SK-N-SH (cell line): ENCODE measurements at regions of chr1 and their contacts with region 1.

Region 1: GRCh38 chr1:152001391-152002249 is 8.0 kb upstream of the S100A10 start:
- DNase-seq: peak; percentile 68
- H3K4me3 ChIP-seq: no peak overlapping the region; a peak in 1 of 4 replicates
- H3K27ac ChIP-seq: no peak overlapping the region
- H3K4me1 ChIP-seq: no peaks in the 10 kb centered on the region
- H3K27me3 ChIP-seq: peaks cover 40% of the 10 kb centered on the region
- CTCF ChIP-seq: peak; percentile 92
- EP300 ChIP-seq: no peak
- RAD21 ChIP-seq: peak; percentile 83

Region 2: GRCh38 chr1:151888972-151889570 is 112.5 kb before region 1 on chr1:
- CTCF ChIA-PET with region 1: interaction called, 13 read pairs
- POLR2A ChIA-PET with region 1: no interaction called
- DNase-seq: peak; percentile 23
- H3K4me3 ChIP-seq: no peak overlapping the region
- H3K27ac ChIP-seq: no peak overlapping the region
- H3K4me1 ChIP-seq: no peaks in the 10 kb centered on the region
- H3K27me3 ChIP-seq: no peaks in the 10 kb centered on the region
- CTCF ChIP-seq: peak; percentile 64
- EP300 ChIP-seq: no peak
- RAD21 ChIP-seq: peak; percentile 55

Region 3: DNA sequence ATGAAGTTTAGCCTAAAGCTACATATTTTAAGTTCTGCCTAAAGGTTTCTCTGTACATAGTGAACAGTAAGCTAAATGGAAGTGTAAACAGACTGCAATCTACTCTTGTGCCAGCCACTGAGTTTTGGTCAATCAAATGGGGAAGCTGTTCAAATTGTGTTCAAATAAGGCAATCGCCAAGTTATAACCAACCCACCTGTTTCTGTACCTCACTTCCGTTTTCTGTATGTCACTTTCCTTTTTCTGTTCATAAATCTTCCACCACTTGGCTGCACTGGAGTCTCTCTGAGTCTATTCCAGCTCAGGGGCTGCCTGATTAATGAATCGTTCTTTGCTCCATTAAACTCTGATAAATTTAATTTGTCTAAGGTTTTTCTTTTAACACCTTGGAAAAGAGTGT is 81.5 kb before region 1 on chr1:
- CTCF ChIA-PET with region 1: interaction called, 18 read pairs
- POLR2A ChIA-PET with region 1: no interaction called
- DNase-seq: no peak
- H3K4me3 ChIP-seq: no peak overlapping the region
- H3K27ac ChIP-seq: no peak overlapping the region
- H3K4me1 ChIP-seq: no peaks in the 10 kb centered on the region
- H3K27me3 ChIP-seq: peaks cover 43% of the 10 kb centered on the region
- CTCF ChIP-seq: no peak
- EP300 ChIP-seq: no peak
- RAD21 ChIP-seq: no peak

Region 4: GRCh38 chr1:151934048-151934493 is 67.5 kb before region 1 on chr1:
- CTCF ChIA-PET with region 1: interaction called, 172 read pairs
- POLR2A ChIA-PET with region 1: no interaction called
- DNase-seq: peak; percentile 52
- H3K4me3 ChIP-seq: peak overlapping the region in 1 of 2 experiments; percentile 43; a peak in 1 of 4 replicates
- H3K27ac ChIP-seq: no peak overlapping the region
- H3K4me1 ChIP-seq: no peaks in the 10 kb centered on the region
- H3K27me3 ChIP-seq: peaks cover 20% of the 10 kb centered on the region
- CTCF ChIP-seq: peak; percentile 91
- EP300 ChIP-seq: no peak
- RAD21 ChIP-seq: peak; percentile 90

Region 5: GRCh38 chr1:151968058-151968457 is 33.6 kb before region 1 on chr1:
- CTCF ChIA-PET with region 1: interaction called, 48 read pairs
- POLR2A ChIA-PET with region 1: no interaction called
- DNase-seq: no peak
- H3K4me3 ChIP-seq: no peak overlapping the region
- H3K27ac ChIP-seq: no peak overlapping the region
- H3K4me1 ChIP-seq: peaks cover 3 to 16% of the 10 kb centered on the region in 2 experiments
- H3K27me3 ChIP-seq: peaks cover 11% of the 10 kb centered on the region; the same call in 1 of the 2 replicates
- CTCF ChIP-seq: peak; percentile 73
- EP300 ChIP-seq: no peak
- RAD21 ChIP-seq: peak; percentile 68

Region 6: GRCh38 chr1:151980287-151981177 is 21.1 kb before region 1 on chr1:
- CTCF ChIA-PET with region 1: interaction called, 40 read pairs
- POLR2A ChIA-PET with region 1: no interaction called
- DNase-seq: no peak
- H3K4me3 ChIP-seq: no peak overlapping the region
- H3K27ac ChIP-seq: peak overlapping the region; percentile 50 to 73
- H3K4me1 ChIP-seq: peaks cover 4 to 32% of the 10 kb centered on the region in 2 experiments; a peak in 3 of 4 replicates
- H3K27me3 ChIP-seq: no peaks in the 10 kb centered on the region
- CTCF ChIP-seq: no peak
- EP300 ChIP-seq: no peak
- RAD21 ChIP-seq: no peak

Region 7: DNA sequence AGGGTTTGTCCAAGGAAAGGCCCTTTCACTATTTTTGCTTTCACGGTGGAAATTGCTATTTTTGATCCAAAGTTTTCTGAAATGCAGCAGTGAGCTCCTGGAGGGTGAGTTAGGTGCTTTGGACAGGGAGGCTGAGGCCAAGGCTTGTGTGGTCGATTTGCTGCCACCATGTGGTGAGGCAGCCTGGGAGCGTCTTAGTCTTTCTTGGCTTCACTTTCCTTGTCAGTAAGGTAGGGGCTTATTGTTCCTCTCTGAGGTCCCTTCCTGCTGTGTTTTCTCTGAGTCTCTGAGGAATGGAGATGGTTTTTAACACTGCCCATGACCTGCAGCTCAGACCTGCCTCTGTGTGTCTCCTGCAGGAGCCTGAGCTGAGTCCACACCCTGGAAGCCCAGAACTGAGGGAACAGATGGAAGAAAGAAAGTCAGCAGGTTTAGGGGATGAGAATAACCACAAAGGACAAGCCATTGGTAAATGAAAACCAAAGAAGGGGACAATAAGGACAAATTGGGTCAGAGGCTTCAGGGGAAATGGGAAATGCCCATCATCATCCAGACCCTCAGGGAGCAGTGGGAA is 12.1 kb after region 1 on chr1:
- CTCF ChIA-PET with region 1: interaction called, 37 read pairs
- POLR2A ChIA-PET with region 1: no interaction called
- DNase-seq: no peak
- H3K4me3 ChIP-seq: no peak overlapping the region; a peak in 1 of 4 replicates
- H3K27ac ChIP-seq: no peak overlapping the region
- H3K4me1 ChIP-seq: no peaks in the 10 kb centered on the region
- H3K27me3 ChIP-seq: peaks cover 82% of the 10 kb centered on the region; the same call in 1 of the 2 replicates
- CTCF ChIP-seq: peak; percentile 55
- EP300 ChIP-seq: no peak
- RAD21 ChIP-seq: peak; percentile 25; the same call in 1 of the 2 replicates

Region 8: DNA sequence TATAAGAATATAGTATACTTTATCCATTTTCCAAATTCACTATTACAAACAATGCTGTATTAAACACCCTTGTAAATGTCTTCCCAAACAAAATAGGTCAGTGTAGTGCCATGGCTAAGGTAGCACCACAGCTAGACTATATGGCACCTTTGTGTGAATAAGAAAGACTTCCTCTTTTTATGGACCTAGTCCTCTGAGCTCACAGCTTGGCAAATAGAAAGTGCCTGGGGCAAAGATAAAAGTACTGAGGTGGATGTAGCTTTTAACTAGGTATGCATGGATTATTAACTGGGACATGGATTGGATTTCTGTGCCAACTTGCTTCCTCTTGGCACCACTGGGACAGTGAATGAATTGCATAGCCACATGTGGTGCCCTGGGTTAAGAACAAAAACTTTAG is 197.4 kb after region 1 on chr1:
- CTCF ChIA-PET with region 1: no interaction called
- POLR2A ChIA-PET with region 1: no interaction called
- DNase-seq: no peak
- H3K4me3 ChIP-seq: no peak overlapping the region
- H3K27ac ChIP-seq: no peak overlapping the region
- H3K4me1 ChIP-seq: no peaks in the 10 kb centered on the region
- H3K27me3 ChIP-seq: peaks cover 11% of the 10 kb centered on the region; the same call in 1 of the 2 replicates
- CTCF ChIP-seq: no peak
- EP300 ChIP-seq: no peak
- RAD21 ChIP-seq: no peak